Transverse colon (tissue), 4 donors: ENCODE measurements at regions of chr10 and their contacts with region 1.

Region 1: GRCh38 chr10:65900271-65900670 is 1025.6 kb upstream of the LRRTM3 start:
- DNase-seq: no peak
- H3K4me3 ChIP-seq: no peak overlapping the region
- H3K27ac ChIP-seq: no peak overlapping the region
- H3K4me1 ChIP-seq: no peaks in the 10 kb centered on the region
- H3K27me3 ChIP-seq: no peaks in the 10 kb centered on the region
- CTCF ChIP-seq: no peak
- EP300 ChIP-seq: no peak
- POLR2A ChIP-seq: no peak

Region 2: GRCh38 chr10:65911436-65911835 is 11.2 kb after region 1 on chr10:
- in situ Hi-C with region 1: no loop called
- intact Hi-C with region 1: loop called (anchors 2 kb)
- DNase-seq: no peak
- H3K4me3 ChIP-seq: no peak overlapping the region
- H3K27ac ChIP-seq: no peak overlapping the region
- H3K4me1 ChIP-seq: no peaks in the 10 kb centered on the region
- H3K27me3 ChIP-seq: no peaks in the 10 kb centered on the region
- CTCF ChIP-seq: no peak
- EP300 ChIP-seq: no peak
- POLR2A ChIP-seq: no peak

Region 3: DNA sequence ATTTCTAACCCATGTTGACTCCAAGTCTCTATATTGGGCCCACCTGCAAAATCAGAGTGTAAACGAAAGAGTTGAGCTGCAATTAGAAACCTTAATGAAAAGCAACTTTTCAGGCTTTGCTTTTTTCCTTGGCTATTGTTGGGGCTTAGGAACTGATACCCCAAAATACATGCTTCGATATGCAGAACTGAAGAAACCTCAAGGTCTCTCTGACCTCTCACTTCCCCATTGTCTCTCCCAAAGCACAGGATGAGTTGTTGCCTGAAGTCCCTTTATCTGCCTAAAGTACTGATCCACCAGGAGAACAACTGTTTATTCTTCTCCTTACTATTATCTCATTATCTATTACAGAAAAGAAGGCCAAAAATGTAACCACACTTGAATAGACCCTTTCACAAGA is 359.6 kb after region 1 on chr10:
- in situ Hi-C with region 1: no loop called
- intact Hi-C with region 1: no loop called
- DNase-seq: no peak
- H3K4me3 ChIP-seq: no peak overlapping the region
- H3K27ac ChIP-seq: no peak overlapping the region
- H3K4me1 ChIP-seq: no peaks in the 10 kb centered on the region
- H3K27me3 ChIP-seq: no peaks in the 10 kb centered on the region
- CTCF ChIP-seq: no peak
- EP300 ChIP-seq: no peak
- POLR2A ChIP-seq: no peak

Region 4: DNA sequence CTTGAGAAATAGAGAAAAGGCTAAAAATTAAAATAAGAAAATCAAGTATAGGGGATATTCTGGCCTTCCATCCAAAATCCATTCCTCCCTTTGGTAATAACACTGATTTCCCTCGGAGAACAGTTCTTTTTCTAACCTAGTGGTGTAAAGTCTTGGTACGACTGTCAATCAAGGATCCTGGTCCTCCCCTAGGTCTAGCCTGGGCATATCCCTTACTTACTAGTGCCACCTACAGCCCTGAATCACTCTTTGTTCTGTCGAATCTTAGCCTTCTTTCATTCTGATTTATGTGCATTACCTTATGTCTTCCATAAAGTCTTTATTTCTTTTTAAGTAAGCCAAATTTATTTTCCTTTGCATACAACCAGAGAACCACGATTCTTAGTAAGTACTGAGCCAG is 726.9 kb after region 1 on chr10:
- in situ Hi-C with region 1: no loop called
- intact Hi-C with region 1: no loop called
- DNase-seq: no peak
- H3K4me3 ChIP-seq: no peak overlapping the region
- H3K27ac ChIP-seq: no peak overlapping the region
- H3K4me1 ChIP-seq: no peaks in the 10 kb centered on the region
- H3K27me3 ChIP-seq: no peaks in the 10 kb centered on the region
- CTCF ChIP-seq: no peak
- EP300 ChIP-seq: no peak
- POLR2A ChIP-seq: no peak